ENCODE measurements at regions of chr6 and their contacts with region 1.

Region 1: GRCh38 chr6:104682722-104683643 is 176.7 kb downstream of the HACE1 start:
- DNase-seq: peak; percentile 82
- H3K4me3 Mint-ChIP-seq: no peak overlapping the region
- H3K27ac Mint-ChIP-seq: no peak overlapping the region
- H3K4me1 Mint-ChIP-seq: peaks cover 20% of the 10 kb centered on the region
- H3K27me3 Mint-ChIP-seq: no peaks in the 10 kb centered on the region

Region 2: DNA sequence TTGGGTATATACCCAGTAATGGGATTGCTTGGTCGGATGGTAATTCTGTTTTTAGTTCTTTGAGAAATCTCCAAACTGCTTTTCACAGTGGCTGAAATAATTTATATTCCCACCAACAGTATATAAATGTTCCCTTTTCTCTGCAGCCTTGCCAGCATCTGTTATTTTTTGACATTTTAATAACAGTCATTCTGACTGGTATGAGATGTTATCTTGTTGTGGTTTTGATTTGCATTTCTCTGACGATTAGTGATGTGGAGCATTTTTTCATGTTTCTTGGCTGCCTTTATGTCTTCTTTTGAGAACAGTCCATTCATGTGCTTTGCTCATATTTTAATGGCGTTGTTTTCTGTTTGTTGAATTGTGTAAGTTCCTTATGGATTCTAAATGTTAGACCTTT is 464.9 kb before region 1 on chr6:
- CTCF ChIA-PET with region 1: no interaction called
- intact Hi-C with region 1: no loop called
- DNase-seq: no peak
- H3K4me3 Mint-ChIP-seq: no peak overlapping the region
- H3K27ac Mint-ChIP-seq: no peak overlapping the region
- H3K4me1 Mint-ChIP-seq: no peaks in the 10 kb centered on the region
- H3K27me3 Mint-ChIP-seq: no peaks in the 10 kb centered on the region

Region 3: DNA sequence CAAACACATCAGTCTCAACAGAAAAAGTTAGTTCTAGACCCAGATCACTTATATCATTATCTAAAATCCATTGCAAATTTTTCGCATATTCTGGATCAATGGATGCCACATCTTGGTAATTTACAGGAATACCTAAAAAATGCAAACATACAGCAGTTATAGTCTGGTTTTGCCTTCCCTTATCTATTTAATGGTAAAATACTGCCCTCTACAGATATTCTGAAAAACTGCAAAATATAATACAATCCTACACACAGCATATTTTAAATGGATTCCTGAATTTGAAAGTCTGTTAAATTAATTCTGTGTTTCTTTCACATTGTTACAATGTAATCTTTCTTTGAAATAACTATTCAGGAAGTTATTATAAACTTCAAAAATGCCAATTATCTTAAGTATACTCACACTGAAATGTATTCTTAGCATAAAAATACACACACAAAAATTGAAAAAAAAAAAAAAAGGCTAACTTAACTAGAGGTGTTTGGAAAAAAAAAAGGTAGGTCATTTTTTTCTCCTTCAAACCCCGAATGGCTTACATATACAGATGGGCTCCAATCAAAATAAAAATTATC is 88.4 kb after region 1 on chr6:
- CTCF ChIA-PET with region 1: interaction called, 31 read pairs
- intact Hi-C with region 1: loop called (anchors 1 kb)
- DNase-seq: no peak
- H3K4me3 Mint-ChIP-seq: no peak overlapping the region
- H3K27ac Mint-ChIP-seq: no peak overlapping the region
- H3K4me1 Mint-ChIP-seq: no peaks in the 10 kb centered on the region
- H3K27me3 Mint-ChIP-seq: no peaks in the 10 kb centered on the region

Region 4: GRCh38 chr6:104859225-104860146 is 176.5 kb after region 1 on chr6 and contains the start of gene HACE1:
- CTCF ChIA-PET with region 1: no interaction called
- intact Hi-C with region 1: loop called (anchors 5 kb)
- DNase-seq: peak; percentile 91
- H3K4me3 Mint-ChIP-seq: peak within 1 kb of the TSS; percentile 91
- H3K27ac Mint-ChIP-seq: peak within 1 kb of the TSS; percentile 73
- H3K4me1 Mint-ChIP-seq: peaks cover 17% of the 10 kb centered on the region
- H3K27me3 Mint-ChIP-seq: peaks cover 4% of the 10 kb centered on the region
- total RNA-seq, gene HACE1: 11.7 to 12.6 TPM

Region 5: GRCh38 chr6:104940881-104941728 is 258.1 kb after region 1 on chr6:
- CTCF ChIA-PET with region 1: no interaction called
- intact Hi-C with region 1: loop called (anchors 2 kb)
- DNase-seq: peak; percentile 45
- H3K4me3 Mint-ChIP-seq: peak overlapping the region; percentile 65
- H3K27ac Mint-ChIP-seq: no peak overlapping the region
- H3K4me1 Mint-ChIP-seq: peaks cover 5% of the 10 kb centered on the region
- H3K27me3 Mint-ChIP-seq: peaks cover 43% of the 10 kb centered on the region

Region 6: DNA sequence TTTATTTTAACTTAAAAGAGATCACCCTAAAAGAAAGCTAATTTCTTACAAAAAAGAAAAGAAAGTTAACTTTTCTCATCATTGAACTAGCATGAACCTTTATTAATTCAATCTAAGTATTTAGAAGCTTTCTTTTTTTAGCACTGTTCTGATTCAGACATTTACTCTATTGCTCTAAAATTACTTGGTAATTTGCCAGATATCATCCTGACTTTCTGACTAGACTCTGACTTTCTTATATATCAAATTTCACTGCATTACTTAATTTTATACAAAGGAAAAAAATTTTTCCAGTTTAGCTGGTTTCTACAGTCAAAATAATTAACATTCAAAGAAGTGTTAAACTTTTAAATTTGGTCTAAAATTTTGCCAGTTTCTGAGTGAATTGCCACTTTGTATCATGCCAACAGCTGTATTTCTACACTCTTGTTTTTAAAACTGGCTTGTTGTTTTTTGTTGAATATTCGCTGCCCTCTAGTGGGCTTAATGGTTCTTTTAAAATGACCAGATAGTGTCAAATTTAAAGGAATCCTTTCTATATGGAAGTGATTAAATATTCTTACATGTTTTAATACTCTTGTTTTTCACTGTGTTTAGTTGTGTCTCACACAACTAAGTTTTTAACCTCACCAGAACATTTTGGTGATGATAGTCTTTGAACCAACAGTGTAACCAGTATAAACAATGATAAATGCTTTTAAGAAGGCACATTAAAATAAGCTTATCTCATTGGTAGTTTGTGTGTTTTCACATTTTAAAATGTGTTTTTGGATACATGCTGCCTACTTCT is 394.8 kb after region 1 on chr6:
- CTCF ChIA-PET with region 1: interaction called, 8 read pairs
- intact Hi-C with region 1: loop called (anchors 1 kb)
- DNase-seq: no peak
- H3K4me3 Mint-ChIP-seq: no peak overlapping the region
- H3K27ac Mint-ChIP-seq: no peak overlapping the region
- H3K4me1 Mint-ChIP-seq: no peaks in the 10 kb centered on the region
- H3K27me3 Mint-ChIP-seq: peaks cover 9% of the 10 kb centered on the region